PC-9 (cell line): ENCODE measurements at regions of chr11 and their contacts with region 1.

Region 1: DNA sequence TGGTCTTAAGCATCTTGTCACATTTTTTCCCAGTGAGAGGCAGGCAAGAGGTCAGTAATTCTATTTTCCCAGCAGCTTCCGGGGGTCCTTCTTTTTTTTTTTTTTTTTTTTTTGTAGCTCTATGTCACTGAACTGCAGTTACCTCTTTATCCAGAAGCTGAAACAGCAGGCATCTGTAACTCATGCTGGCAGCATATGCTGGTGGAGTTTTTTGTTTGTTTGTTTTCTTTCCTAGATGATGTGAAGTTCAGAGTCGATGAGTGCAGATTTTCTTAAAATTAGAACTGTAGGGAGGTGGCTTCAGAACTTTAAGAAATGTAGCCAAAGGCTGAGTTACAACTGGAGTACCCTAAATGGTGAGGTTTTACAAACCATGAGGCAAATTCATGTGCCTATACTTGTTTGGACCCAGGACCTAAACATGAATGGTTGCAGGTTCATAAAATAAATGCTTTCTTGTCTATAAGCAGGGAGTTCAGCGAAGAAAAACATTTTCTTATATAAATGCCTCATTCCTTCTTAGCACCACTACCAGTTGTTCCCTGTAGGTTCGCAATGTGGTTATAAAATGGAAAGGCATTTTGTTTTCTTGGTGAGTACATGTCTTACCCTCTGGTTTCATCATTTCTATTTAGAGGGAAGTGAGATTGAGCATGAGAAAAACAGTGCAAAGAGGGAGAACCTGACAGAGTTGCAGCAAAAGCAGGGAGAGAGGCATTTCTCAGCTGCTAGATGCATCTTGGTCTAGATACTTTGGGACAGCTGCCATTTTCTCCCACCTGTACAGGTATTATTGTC is 84.0 kb downstream of the TRIM44 start:
- DNase-seq: no peak
- H3K4me3 ChIP-seq: no peak overlapping the region
- H3K27ac ChIP-seq: no peak overlapping the region
- H3K4me1 ChIP-seq: 0 out of 2 replicates have a peak, but pooled peaks cover 5% of the 10 kb centered on the region
- H3K27me3 ChIP-seq: no peaks in the 10 kb centered on the region
- CTCF ChIP-seq: no peak

Region 2: GRCh38 chr11:36333897-36334296 is 587.3 kb after region 1 on chr11:
- CTCF ChIA-PET with region 1: no interaction called
- POLR2A ChIA-PET with region 1: interaction called, 12 read pairs
- intact Hi-C with region 1: no loop called
- DNase-seq: peak in 1 of 2 experiments; percentile 39
- H3K4me3 ChIP-seq: no peak overlapping the region
- H3K27ac ChIP-seq: no peak overlapping the region
- H3K4me1 ChIP-seq: peaks cover 9% of the 10 kb centered on the region
- H3K27me3 ChIP-seq: no peaks in the 10 kb centered on the region
- CTCF ChIP-seq: no peak